Naive thymus-derived CD4-positive, alpha-beta T cell (primary cell): ENCODE measurements at regions of chr1 and their contacts with region 1.

Region 1: DNA sequence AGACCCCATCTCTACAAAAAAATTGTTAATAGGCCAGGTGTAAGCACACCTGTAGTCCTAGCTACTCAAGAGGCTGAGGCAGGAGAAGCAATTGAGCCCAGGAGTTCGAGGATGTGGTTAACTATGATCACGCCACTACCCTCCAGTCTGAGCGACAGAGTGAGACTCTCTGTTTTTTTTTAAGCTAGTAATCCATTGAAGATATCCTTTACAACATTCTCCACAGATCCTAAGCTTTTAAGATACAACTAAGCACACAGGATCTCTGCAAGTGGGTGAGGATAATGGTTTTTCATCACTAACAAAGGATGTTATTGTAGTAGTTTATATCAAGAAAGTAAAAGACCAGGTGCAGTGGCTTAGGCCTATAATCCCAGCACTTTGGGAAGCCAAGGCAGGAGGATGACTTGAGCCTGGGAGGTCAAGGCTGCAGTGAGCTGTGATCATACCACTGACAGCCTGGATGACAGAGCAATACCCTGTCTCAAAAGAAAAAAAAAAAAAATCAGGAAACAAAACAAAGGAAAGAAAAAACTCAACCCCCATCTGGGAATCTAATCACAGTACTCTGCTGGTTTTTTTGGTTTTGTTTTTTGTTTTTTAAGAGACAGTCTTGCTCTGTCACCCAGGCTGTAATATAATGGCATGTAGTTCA is 166.1 kb downstream of the RERE start:
- DNase-seq: peak in 4 of 9 donors; percentile 18 to 38 (median 30)
- ATAC-seq: peak; percentile 59
- H3K4me3 ChIP-seq: no peak overlapping the region
- H3K4me3 Mint-ChIP-seq: peak overlapping the region in 3 of 10 donors; percentile 29 to 70 (median 33)
- H3K27ac ChIP-seq: no peak overlapping the region
- H3K27ac Mint-ChIP-seq: peak overlapping the region in 8 of 9 donors; percentile 11 to 80 (median 43)
- H3K4me1 ChIP-seq: peaks cover 5 to 10% of the 10 kb centered on the region in 2 donors
- H3K4me1 Mint-ChIP-seq: peaks cover 13 to 60% (median 21%) of the 10 kb centered on the region in 7 donors
- H3K27me3 ChIP-seq: no peaks in the 10 kb centered on the region
- H3K27me3 Mint-ChIP-seq: no peaks in the 10 kb centered on the region

Region 2: DNA sequence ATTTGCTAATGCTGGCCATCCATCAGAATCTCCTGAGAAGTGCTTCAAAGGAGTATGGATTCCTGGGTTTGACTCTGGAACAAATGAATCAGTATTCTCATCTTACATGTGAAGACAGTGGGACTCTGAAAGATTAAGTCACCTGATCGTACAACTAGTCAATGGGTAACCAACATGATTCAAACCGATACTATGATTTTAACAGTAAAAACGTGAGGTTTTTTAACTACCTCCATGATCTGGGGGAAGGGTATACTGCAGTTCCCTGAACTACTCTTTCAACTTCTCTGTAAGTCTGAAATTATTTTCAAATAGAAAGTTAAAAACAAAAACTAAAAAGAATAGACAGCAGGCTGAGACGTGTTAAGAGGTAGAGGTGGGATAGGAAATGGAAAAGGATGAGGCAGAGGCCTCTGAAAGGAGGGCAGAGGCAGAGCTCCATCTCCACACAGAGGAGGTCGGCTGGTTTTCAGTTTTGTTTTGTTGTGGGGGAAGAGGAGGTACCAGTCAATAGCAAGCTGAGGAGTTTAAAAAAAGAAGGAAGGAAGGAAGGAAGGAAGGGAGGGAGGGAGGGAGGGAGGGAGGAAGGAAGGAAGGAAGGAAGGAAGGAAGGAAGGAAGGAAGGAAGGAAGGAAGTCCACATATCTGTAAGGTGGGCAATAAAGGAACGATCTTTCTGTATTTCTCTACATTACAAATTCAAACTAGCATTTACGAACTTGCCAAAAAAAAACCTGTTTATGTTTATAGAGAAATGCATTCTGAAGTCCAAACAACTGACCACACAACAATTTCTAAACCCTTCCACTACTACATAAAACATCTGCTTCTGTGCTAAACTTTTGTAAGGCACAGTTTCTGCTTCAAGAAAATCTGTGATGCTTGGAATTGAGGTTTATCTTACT is 47.1 kb before region 1 on chr1:
- CTCF ChIA-PET with region 1: no interaction called
- POLR2A ChIA-PET with region 1: interaction called, 4 read pairs
- intact Hi-C with region 1: loop called in 1 of 2 experiments (anchors 1 kb)
- DNase-seq: peak in 3 of 9 donors; percentile 10 to 43 (median 10)
- ATAC-seq: peak; percentile 45
- H3K4me3 ChIP-seq: no peak overlapping the region
- H3K4me3 Mint-ChIP-seq: peak overlapping the region; percentile 42 to 78 (median 67)
- H3K27ac ChIP-seq: peak overlapping the region; percentile 37
- H3K27ac Mint-ChIP-seq: peak overlapping the region; percentile 27 to 88 (median 77)
- H3K4me1 ChIP-seq: peaks cover 17 to 18% of the 10 kb centered on the region in 2 donors
- H3K4me1 Mint-ChIP-seq: peaks cover 24 to 51% (median 38%) of the 10 kb centered on the region in 7 donors
- H3K27me3 ChIP-seq: no peaks in the 10 kb centered on the region
- H3K27me3 Mint-ChIP-seq: no peaks in the 10 kb centered on the region